ENCODE measurements at regions of chr1 and their contacts with region 1.

Region 1: GRCh38 chr1:161225534-161226319 is at the start of gene TOMM40L:
- DNase-seq: peak; percentile 86 to 98 (median 96)
- H3K4me3 ChIP-seq: peak within 1 kb of the TSS in 3 of 4 donors; percentile 37 to 57 (median 51)
- H3K27ac ChIP-seq: peak within 1 kb of the TSS in 4 of 5 donors; percentile 14 to 60 (median 36)
- H3K4me1 ChIP-seq: peaks cover 5 to 23% of the 10 kb centered on the region in 2 donors
- H3K27me3 ChIP-seq: no peaks in the 10 kb centered on the region
- CTCF ChIP-seq: peak; percentile 23 to 69 (median 59)
- POLR2A ChIP-seq: peak in 1 of 2 donors; percentile 12
- total RNA-seq, gene TOMM40L: 7.0 to 18.4 (median 12.1) TPM

Region 2: DNA sequence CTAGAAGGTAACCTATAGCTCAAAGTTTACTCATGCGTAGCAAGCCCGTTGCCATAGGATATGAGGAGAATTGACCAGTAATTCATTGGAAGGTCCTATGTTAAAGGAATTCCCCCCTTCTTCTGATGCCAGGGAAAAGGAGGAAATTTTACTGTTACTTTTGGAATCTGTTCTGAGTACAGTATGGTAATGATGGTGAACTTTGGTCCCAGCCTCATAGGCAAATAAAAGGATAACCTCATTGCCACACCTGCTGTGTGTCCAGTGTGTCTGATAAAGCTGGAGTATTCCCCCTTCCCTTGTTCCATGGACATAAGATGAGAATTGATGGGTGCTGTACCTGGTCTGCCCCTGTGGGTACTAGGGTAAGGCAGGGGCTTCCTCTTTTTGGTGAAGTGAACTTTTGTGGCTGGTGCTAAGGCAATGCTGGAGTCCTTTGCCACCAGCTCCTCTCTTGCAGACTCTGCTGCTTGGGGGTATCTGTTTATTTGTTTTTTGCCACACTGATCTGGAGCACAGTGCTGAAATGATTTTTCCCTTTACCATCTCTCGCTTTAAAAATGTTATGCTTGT is 61.8 kb after region 1 on chr1:
- intact Hi-C with region 1: loop called (anchors 5 to 10 kb)
- DNase-seq: no peak
- H3K4me3 ChIP-seq: no peak overlapping the region
- H3K27ac ChIP-seq: no peak overlapping the region
- H3K4me1 ChIP-seq: no peaks in the 10 kb centered on the region
- H3K27me3 ChIP-seq: no peaks in the 10 kb centered on the region
- CTCF ChIP-seq: no peak
- POLR2A ChIP-seq: no peak

Region 3: DNA sequence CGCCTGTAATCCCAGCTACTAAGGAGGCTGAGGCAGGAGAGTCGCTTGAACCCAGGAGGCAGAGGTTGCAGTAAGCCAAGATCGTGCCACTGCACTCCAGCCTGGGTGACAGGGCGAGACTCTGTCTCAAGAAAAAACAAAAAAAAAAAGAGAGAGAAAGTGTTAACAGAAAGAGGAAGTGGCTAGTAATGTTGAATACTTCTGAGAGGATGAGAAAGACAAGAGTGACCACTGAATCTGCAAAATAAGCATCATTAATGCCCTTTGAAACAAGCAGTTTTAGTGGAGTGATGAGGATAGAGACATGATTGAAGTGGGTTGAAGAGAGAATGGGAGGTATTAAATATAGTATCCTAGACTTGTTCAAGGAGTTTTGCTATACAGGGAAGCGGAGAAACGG is 72.4 kb after region 1 on chr1:
- intact Hi-C with region 1: loop called in 1 of 2 experiments (anchors 10 kb)
- DNase-seq: no peak
- H3K4me3 ChIP-seq: no peak overlapping the region
- H3K27ac ChIP-seq: no peak overlapping the region
- H3K4me1 ChIP-seq: no peaks in the 10 kb centered on the region
- H3K27me3 ChIP-seq: no peaks in the 10 kb centered on the region
- CTCF ChIP-seq: no peak
- POLR2A ChIP-seq: no peak

Region 4: GRCh38 chr1:161367684-161368400 is 142.1 kb after region 1 on chr1 and contains the start of gene CFAP126:
- intact Hi-C with region 1: loop called (anchors 5 to 10 kb)
- DNase-seq: peak; percentile 72 to 92 (median 85)
- H3K4me3 ChIP-seq: no peak within 1 kb of the TSS
- H3K27ac ChIP-seq: peak within 1 kb of the TSS in 2 of 5 donors; percentile 36 to 42
- H3K4me1 ChIP-seq: peaks cover 15 to 22% of the 10 kb centered on the region in 2 donors
- H3K27me3 ChIP-seq: no peaks in the 10 kb centered on the region
- CTCF ChIP-seq: peak; percentile 28 to 69 (median 50)
- POLR2A ChIP-seq: no peak
- total RNA-seq, gene CFAP126: 0.28 TPM in 1 of 9 donors, not detected in the others

Region 5: GRCh38 chr1:161374373-161374772 is 148.6 kb after region 1 on chr1:
- intact Hi-C with region 1: loop called (anchors 5 to 10 kb)
- DNase-seq: peak in 1 of 7 donors; percentile 1
- H3K4me3 ChIP-seq: no peak overlapping the region
- H3K27ac ChIP-seq: no peak overlapping the region
- H3K4me1 ChIP-seq: no peaks in the 10 kb centered on the region
- H3K27me3 ChIP-seq: no peaks in the 10 kb centered on the region
- CTCF ChIP-seq: peak in 5 of 6 experiments; percentile 10 to 42 (median 25)
- POLR2A ChIP-seq: no peak

Region 6: DNA sequence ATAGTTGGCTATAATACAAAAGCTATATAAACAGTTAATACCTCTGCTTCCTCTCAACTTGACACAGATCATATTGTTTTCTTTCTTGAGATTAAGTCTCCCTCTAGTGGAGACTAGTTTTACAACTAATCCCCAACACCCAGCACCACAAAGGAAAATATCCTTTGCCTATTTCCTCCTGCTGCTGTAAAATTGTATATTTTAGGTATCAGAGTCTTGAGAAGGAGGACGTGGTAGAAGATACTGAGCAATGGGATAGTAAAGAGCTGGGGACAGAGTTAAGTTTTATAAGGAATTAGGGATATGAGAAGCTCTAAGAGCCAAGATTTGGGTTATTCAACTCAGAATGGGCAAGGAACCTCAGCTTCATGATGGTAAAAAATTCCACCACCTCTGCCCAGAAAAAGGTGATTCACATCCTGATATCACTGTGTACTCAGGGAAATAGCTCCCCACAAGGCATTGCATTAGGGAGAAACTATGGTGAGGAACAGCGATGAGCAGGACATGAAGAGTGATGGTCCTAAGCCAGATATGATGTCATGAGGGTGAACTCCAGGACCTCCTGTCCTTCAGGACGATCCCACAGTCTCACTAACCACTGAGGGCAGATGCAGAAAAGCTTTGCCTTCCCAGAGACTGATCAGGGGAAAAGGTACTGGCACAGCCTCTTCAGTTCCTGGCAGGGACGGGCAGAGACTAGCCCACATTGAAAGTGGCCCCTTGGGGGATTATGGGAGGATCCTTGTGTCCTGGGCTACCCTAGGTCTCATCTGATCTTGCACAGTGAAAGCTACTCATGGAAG is 156.7 kb after region 1 on chr1:
- intact Hi-C with region 1: loop called (anchors 5 to 10 kb)
- DNase-seq: peak in 3 of 7 donors; percentile 56 to 64 (median 64)
- H3K4me3 ChIP-seq: no peak overlapping the region
- H3K27ac ChIP-seq: peak overlapping the region; percentile 10 to 82 (median 20)
- H3K4me1 ChIP-seq: peaks cover 0 to 11% of the 10 kb centered on the region in 2 donors
- H3K27me3 ChIP-seq: no peaks in the 10 kb centered on the region
- CTCF ChIP-seq: peak; percentile 41 to 80 (median 72)
- POLR2A ChIP-seq: no peak